ENCODE measurements at regions of chr19 and their contacts with region 1.

Region 1: GRCh38 chr19:17183858-17184321 is 31.3 kb upstream of the USE1 start:
- DNase-seq: peak; percentile 60
- ATAC-seq: peak; percentile 71
- H3K4me3 Mint-ChIP-seq: peak overlapping the region; percentile 83
- H3K27ac Mint-ChIP-seq: peak overlapping the region; percentile 96
- H3K4me1 Mint-ChIP-seq: peaks cover 28% of the 10 kb centered on the region
- H3K27me3 Mint-ChIP-seq: no peaks in the 10 kb centered on the region

Region 2: GRCh38 chr19:17075035-17075863 is 108.6 kb before region 1 on chr19 and contains the starts of genes HAUS8 and MYO9B:
- POLR2A ChIA-PET with region 1: interaction called, 36 read pairs
- DNase-seq: peak; percentile 99
- ATAC-seq: peak; percentile 90
- H3K4me3 Mint-ChIP-seq: peak within 1 kb of the TSS; percentile 99
- H3K27ac Mint-ChIP-seq: peak within 1 kb of the TSS; percentile 98
- H3K4me1 Mint-ChIP-seq: peaks cover 45% of the 10 kb centered on the region
- H3K27me3 Mint-ChIP-seq: no peaks in the 10 kb centered on the region
- total RNA-seq, gene HAUS8: 50.7 to 51.7 TPM
- total RNA-seq, gene MYO9B: 275 to 285 TPM

Region 3: GRCh38 chr19:17125715-17126677 is 57.9 kb before region 1 on chr19:
- POLR2A ChIA-PET with region 1: interaction called, 32 read pairs
- DNase-seq: peak; percentile 84
- ATAC-seq: peak; percentile 93
- H3K4me3 Mint-ChIP-seq: peak overlapping the region; percentile 89
- H3K27ac Mint-ChIP-seq: peak overlapping the region; percentile 99
- H3K4me1 Mint-ChIP-seq: peaks cover 49% of the 10 kb centered on the region
- H3K27me3 Mint-ChIP-seq: no peaks in the 10 kb centered on the region

Region 4: DNA sequence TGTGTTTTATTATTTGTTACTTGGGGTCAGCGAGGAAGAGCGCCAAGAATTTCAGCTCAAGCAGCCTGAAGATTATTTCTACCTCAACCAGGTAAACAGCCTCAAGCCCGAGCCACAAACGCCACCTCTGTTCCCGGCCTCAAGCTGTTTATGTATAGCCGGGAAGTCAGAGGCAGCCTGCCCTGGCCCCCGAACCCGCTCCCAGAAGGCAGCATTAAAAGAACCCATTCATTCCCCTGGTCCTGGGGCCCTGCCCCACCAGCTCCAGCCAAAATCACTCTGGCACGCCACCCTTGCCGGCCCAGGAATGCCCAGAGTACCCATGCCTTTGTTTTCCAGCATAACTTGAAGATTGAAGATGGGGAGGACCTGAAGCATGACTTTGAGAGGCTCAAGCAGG is 29.9 kb before region 1 on chr19:
- POLR2A ChIA-PET with region 1: no interaction called
- DNase-seq: no peak
- ATAC-seq: no peak
- H3K4me3 Mint-ChIP-seq: no peak overlapping the region
- H3K27ac Mint-ChIP-seq: no peak overlapping the region
- H3K4me1 Mint-ChIP-seq: no peaks in the 10 kb centered on the region
- H3K27me3 Mint-ChIP-seq: no peaks in the 10 kb centered on the region

Region 5: GRCh38 chr19:17172624-17173342 is 11.1 kb before region 1 on chr19:
- POLR2A ChIA-PET with region 1: interaction called, 14 read pairs
- DNase-seq: no peak
- ATAC-seq: no peak
- H3K4me3 Mint-ChIP-seq: no peak overlapping the region
- H3K27ac Mint-ChIP-seq: no peak overlapping the region
- H3K4me1 Mint-ChIP-seq: no peaks in the 10 kb centered on the region
- H3K27me3 Mint-ChIP-seq: no peaks in the 10 kb centered on the region

Region 6: DNA sequence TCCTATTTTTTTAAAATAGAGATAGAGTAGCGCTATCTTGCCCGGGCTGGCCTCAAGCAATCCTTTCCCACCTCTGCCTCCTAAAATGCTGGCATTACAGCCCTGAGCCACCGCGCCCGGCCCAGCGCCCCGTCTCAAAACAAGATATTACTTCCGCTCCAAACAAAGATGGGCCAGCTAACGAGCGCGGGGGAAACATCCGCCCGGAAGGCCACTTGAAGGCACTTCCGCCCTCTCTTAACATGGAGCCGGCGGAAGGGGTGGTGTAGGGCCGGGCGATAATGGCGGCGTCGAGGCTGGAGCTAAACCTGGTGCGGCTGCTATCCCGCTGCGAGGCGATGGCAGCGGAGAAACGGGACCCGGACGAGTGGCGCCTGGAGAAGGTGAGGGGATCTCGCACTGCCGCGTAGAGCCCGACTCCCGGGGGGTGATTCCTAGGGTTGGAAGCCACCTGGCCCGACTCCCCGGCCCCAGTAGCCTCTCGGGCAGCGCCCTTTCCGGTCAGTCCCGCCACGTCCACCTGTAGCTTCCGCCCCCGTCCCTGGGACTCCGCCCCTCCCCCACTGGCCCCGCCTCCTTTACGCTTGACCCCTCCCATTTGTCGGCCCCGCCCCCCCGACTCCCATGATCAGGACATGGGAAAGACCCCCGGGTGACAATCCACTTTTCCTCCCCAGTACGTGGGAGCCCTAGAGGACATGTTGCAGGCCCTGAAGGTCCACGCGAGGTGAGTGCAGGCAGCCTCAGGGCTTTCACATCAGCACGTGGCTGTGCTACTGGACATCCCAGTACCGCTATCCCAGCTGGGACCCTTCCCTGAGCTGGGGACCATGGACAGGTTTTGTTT is 31.5 kb after region 1 on chr19 and contains the start of gene USE1:
- POLR2A ChIA-PET with region 1: interaction called, 28 read pairs
- DNase-seq: peak; percentile 83
- ATAC-seq: peak; percentile 95
- H3K4me3 Mint-ChIP-seq: peak within 1 kb of the TSS; percentile 90
- H3K27ac Mint-ChIP-seq: peak within 1 kb of the TSS; percentile 99
- H3K4me1 Mint-ChIP-seq: peaks cover 13% of the 10 kb centered on the region
- H3K27me3 Mint-ChIP-seq: no peaks in the 10 kb centered on the region
- total RNA-seq, gene USE1: 30.1 to 31.8 TPM

Region 7: GRCh38 chr19:17226002-17226933 is 42.4 kb after region 1 on chr19 and contains the start of gene OCEL1:
- POLR2A ChIA-PET with region 1: interaction called, 16 read pairs
- DNase-seq: peak; percentile 95
- ATAC-seq: peak; percentile 95
- H3K4me3 Mint-ChIP-seq: peak within 1 kb of the TSS; percentile 93
- H3K27ac Mint-ChIP-seq: peak within 1 kb of the TSS; percentile 98
- H3K4me1 Mint-ChIP-seq: peaks cover 7% of the 10 kb centered on the region
- H3K27me3 Mint-ChIP-seq: no peaks in the 10 kb centered on the region
- total RNA-seq, gene OCEL1: 31.8 to 39.0 TPM

Region 8: GRCh38 chr19:17235618-17236377 is 51.9 kb after region 1 on chr19:
- POLR2A ChIA-PET with region 1: interaction called, 14 read pairs
- DNase-seq: peak; percentile 84
- ATAC-seq: peak; percentile 94
- H3K4me3 Mint-ChIP-seq: peak overlapping the region; percentile 81
- H3K27ac Mint-ChIP-seq: peak overlapping the region; percentile 56
- H3K4me1 Mint-ChIP-seq: peaks cover 5% of the 10 kb centered on the region
- H3K27me3 Mint-ChIP-seq: peaks cover 2% of the 10 kb centered on the region

Region 9: GRCh38 chr19:17266975-17267788 is 83.3 kb after region 1 on chr19 and contains the start of gene BABAM1:
- POLR2A ChIA-PET with region 1: no interaction called
- DNase-seq: peak; percentile 84
- ATAC-seq: peak; percentile 96
- H3K4me3 Mint-ChIP-seq: peak within 1 kb of the TSS; percentile 89
- H3K27ac Mint-ChIP-seq: peak within 1 kb of the TSS; percentile 72
- H3K4me1 Mint-ChIP-seq: peaks cover 20% of the 10 kb centered on the region
- H3K27me3 Mint-ChIP-seq: no peaks in the 10 kb centered on the region
- total RNA-seq, gene BABAM1: 104 to 112 TPM